ENCODE measurements at regions of chr5 and their contacts with region 1.

Region 1: DNA sequence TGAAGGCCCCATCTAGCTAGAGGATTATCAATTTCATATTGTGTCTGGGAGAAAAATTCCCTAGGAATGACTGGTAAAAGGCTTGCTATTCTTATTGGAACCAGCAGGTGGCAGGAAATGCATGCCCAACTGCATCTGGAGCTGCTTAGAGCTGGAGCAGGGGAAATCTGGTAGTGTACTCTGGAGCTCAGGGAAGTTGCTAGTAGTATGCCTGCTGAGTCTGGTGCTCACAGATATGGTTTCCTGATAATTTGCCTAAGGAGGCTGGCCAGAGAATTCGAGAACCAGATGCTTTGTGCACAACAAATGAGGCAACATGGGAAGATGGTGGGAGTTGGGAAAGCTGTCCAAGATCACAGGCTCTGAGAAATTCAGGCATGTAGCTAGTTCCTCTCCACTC is 53.7 kb downstream of the G3BP1 start:
- DNase-seq: no peak
- H3K4me3 ChIP-seq: no peak overlapping the region
- H3K27ac ChIP-seq: no peak overlapping the region
- H3K4me1 ChIP-seq: peaks cover 0 to 5% (median 2%) of the 10 kb centered on the region in 4 donors
- H3K27me3 ChIP-seq: no peaks in the 10 kb centered on the region
- CTCF ChIP-seq: peak; percentile 71 to 87 (median 73)
- EP300 ChIP-seq: no peak
- POLR2A ChIP-seq: no peak

Region 2: GRCh38 chr5:151855701-151856100 is 30.3 kb after region 1 on chr5:
- intact Hi-C with region 1: no loop called
- DNase-seq: no peak
- H3K4me3 ChIP-seq: no peak overlapping the region
- H3K27ac ChIP-seq: no peak overlapping the region
- H3K4me1 ChIP-seq: no peaks in the 10 kb centered on the region
- H3K27me3 ChIP-seq: no peaks in the 10 kb centered on the region
- CTCF ChIP-seq: no peak
- EP300 ChIP-seq: no peak
- POLR2A ChIP-seq: no peak

Region 3: GRCh38 chr5:152142840-152143469 is 317.5 kb after region 1 on chr5:
- intact Hi-C with region 1: loop called (anchors 2 kb)
- DNase-seq: no peak
- H3K4me3 ChIP-seq: no peak overlapping the region
- H3K27ac ChIP-seq: no peak overlapping the region
- H3K4me1 ChIP-seq: peaks cover 0 to 5% (median 4%) of the 10 kb centered on the region in 4 donors
- H3K27me3 ChIP-seq: no peaks in the 10 kb centered on the region
- CTCF ChIP-seq: peak; percentile 67 to 91 (median 86)
- EP300 ChIP-seq: no peak
- POLR2A ChIP-seq: no peak

Region 4: GRCh38 chr5:152505442-152506042 is 680.1 kb after region 1 on chr5:
- intact Hi-C with region 1: loop called (anchors 10 kb)
- DNase-seq: no peak
- H3K4me3 ChIP-seq: no peak overlapping the region
- H3K27ac ChIP-seq: no peak overlapping the region
- H3K4me1 ChIP-seq: no peaks in the 10 kb centered on the region
- H3K27me3 ChIP-seq: no peaks in the 10 kb centered on the region
- CTCF ChIP-seq: peak; percentile 35 to 57 (median 54)
- EP300 ChIP-seq: no peak
- POLR2A ChIP-seq: no peak